ENCODE measurements at regions of chr7 and their contacts with region 1.

Region 1: GRCh38 chr7:114979388-114979787 is 57.5 kb downstream of the MDFIC start:
- DNase-seq: no peak
- ATAC-seq: no peak
- H3K4me3 ChIP-seq: no peak overlapping the region
- H3K4me3 Mint-ChIP-seq: no peak overlapping the region
- H3K27ac ChIP-seq: no peak overlapping the region
- H3K27ac Mint-ChIP-seq: no peak overlapping the region
- H3K4me1 ChIP-seq: peaks cover 10% of the 10 kb centered on the region
- H3K4me1 Mint-ChIP-seq: peaks cover 49% of the 10 kb centered on the region
- H3K27me3 ChIP-seq: no peaks in the 10 kb centered on the region
- H3K27me3 Mint-ChIP-seq: no peaks in the 10 kb centered on the region
- CTCF ChIP-seq: no peak

Region 2: GRCh38 chr7:114966156-114966555 is 13.2 kb before region 1 on chr7:
- CTCF ChIA-PET with region 1: no interaction called
- POLR2A ChIA-PET with region 1: no interaction called
- intact Hi-C with region 1: loop called in 1 of 2 experiments (anchors 2 kb)
- DNase-seq: no peak
- ATAC-seq: no peak
- H3K4me3 ChIP-seq: no peak overlapping the region
- H3K4me3 Mint-ChIP-seq: no peak overlapping the region
- H3K27ac ChIP-seq: no peak overlapping the region
- H3K27ac Mint-ChIP-seq: peak overlapping the region; percentile 45
- H3K4me1 ChIP-seq: no peaks in the 10 kb centered on the region
- H3K4me1 Mint-ChIP-seq: peaks cover 69% of the 10 kb centered on the region
- H3K27me3 ChIP-seq: no peaks in the 10 kb centered on the region
- H3K27me3 Mint-ChIP-seq: no peaks in the 10 kb centered on the region
- CTCF ChIP-seq: no peak

Region 3: GRCh38 chr7:114997487-114998404 is 18.4 kb after region 1 on chr7:
- CTCF ChIA-PET with region 1: no interaction called
- POLR2A ChIA-PET with region 1: no interaction called
- intact Hi-C with region 1: loop called in 1 of 2 experiments (anchors 2 kb)
- DNase-seq: no peak
- ATAC-seq: no peak
- H3K4me3 ChIP-seq: no peak overlapping the region
- H3K4me3 Mint-ChIP-seq: no peak overlapping the region
- H3K27ac ChIP-seq: no peak overlapping the region
- H3K27ac Mint-ChIP-seq: no peak overlapping the region
- H3K4me1 ChIP-seq: peaks cover 10% of the 10 kb centered on the region
- H3K4me1 Mint-ChIP-seq: peaks cover 66% of the 10 kb centered on the region
- H3K27me3 ChIP-seq: no peaks in the 10 kb centered on the region
- H3K27me3 Mint-ChIP-seq: no peaks in the 10 kb centered on the region
- CTCF ChIP-seq: no peak

Measured in CD8-positive, alpha-beta T cell (primary cell).